Dendritic cell treated with granulocyte-macrophage colony-stimulating factor and Interleukin-4, amounts not matched to agents 40 ng/mL and 50 ng/mL, for 4 days (primary cell): ENCODE measurements at regions of chr3 and their contacts with region 1.

Region 1: DNA sequence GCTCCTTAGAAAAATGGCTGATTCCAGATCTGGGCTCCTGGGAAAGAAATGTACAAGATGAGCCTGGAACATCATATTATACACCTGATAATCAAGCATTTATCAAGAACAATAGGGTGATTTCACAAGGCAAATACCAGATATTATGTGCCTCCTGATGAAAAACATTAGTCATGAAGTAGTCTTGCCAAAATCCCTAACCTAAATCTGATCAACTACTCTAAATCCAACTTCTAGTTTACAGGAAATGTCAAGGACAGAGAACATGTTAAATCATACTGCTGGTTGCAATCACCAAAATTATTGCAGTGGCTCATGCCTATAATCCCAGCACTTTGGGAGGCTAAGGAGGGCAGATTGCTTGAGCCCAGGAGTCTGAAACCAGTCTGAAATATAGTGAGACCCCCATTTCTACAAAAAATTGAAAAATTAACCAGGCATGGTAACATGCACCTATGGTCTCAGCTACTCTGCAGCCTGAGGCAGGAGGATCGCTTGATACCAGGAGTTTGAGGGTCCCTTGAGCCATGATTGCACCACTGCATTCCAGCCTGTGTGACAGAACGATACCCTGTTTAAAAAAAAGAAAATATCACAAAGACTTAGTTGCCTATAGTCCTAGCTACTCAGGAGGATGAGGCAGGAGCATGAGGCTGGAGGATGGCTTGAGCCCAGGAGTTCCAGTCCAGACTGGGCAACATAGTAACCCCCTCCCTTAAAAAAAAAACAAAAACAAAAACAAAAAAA is 34.9 kb upstream of the ATP13A3 start:
- H3K4me3 Mint-ChIP-seq: no peak overlapping the region
- H3K27ac Mint-ChIP-seq: no peak overlapping the region
- H3K4me1 Mint-ChIP-seq: peaks cover 27% of the 10 kb centered on the region
- H3K27me3 Mint-ChIP-seq: no peaks in the 10 kb centered on the region

Region 2: GRCh38 chr3:194486540-194487288 is 35.0 kb before region 1 on chr3 and contains the start of gene ATP13A3:
- intact Hi-C with region 1: loop called (anchors 2 kb)
- H3K4me3 Mint-ChIP-seq: peak within 1 kb of the TSS; percentile 85
- H3K27ac Mint-ChIP-seq: peak within 1 kb of the TSS; percentile 92
- H3K4me1 Mint-ChIP-seq: peaks cover 69% of the 10 kb centered on the region
- H3K27me3 Mint-ChIP-seq: no peaks in the 10 kb centered on the region

Region 3: DNA sequence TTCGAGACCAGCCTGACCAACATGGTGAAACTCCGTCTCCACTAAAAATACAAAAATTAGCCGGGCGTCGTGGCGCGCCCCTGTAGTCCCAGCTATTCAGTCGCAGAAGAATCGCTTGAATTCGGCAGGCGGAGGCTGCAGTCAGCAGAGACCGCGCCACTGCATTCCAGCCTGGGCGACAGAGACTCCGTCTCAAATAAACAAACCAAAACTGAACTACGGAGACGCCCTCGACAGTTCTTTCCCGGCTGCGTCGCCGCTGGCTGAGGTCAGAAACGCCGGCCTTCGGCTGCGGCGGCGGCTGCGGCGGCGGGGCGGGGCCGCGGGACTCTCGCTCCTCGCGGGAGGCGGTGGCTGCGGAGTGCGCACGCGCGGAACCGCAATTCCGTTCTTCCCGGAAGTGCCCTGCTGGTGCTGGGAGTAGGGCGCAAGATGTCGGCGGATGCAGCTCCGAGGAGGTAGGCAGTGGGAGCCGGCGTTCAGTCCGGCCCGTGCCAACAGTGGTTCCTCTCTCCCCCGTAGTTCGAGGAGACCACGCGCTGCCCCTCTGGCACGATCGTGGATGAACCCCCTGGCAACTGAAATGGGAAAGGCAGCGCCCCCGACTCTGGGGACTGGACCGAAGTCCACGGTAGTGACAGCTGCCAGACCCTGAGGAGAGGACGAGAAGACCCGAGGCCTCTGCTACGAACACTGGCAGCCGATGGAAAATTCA is 62.1 kb after region 1 on chr3:
- intact Hi-C with region 1: loop called (anchors 2 kb)
- H3K4me3 Mint-ChIP-seq: peak overlapping the region; percentile 99
- H3K27ac Mint-ChIP-seq: peak overlapping the region; percentile 100
- H3K4me1 Mint-ChIP-seq: peaks cover 45% of the 10 kb centered on the region
- H3K27me3 Mint-ChIP-seq: no peaks in the 10 kb centered on the region